Activated CD4-positive, alpha-beta T cell treated with anti-CD3 and anti-CD28 coated beads, Interleukin-2, amount 10 ng/mL, durations not matched to agents 24 days and 14 days (primary cell): ENCODE measurements at regions of chr1 and their contacts with region 1.

Region 1: GRCh38 chr1:68197891-68198290 is 34.4 kb downstream of the WLS start:
- DNase-seq: no peak
- H3K4me3 Mint-ChIP-seq: no peak overlapping the region
- H3K27ac Mint-ChIP-seq: no peak overlapping the region
- H3K4me1 Mint-ChIP-seq: no peaks in the 10 kb centered on the region
- H3K27me3 Mint-ChIP-seq: peaks cover 4% of the 10 kb centered on the region

Region 2: DNA sequence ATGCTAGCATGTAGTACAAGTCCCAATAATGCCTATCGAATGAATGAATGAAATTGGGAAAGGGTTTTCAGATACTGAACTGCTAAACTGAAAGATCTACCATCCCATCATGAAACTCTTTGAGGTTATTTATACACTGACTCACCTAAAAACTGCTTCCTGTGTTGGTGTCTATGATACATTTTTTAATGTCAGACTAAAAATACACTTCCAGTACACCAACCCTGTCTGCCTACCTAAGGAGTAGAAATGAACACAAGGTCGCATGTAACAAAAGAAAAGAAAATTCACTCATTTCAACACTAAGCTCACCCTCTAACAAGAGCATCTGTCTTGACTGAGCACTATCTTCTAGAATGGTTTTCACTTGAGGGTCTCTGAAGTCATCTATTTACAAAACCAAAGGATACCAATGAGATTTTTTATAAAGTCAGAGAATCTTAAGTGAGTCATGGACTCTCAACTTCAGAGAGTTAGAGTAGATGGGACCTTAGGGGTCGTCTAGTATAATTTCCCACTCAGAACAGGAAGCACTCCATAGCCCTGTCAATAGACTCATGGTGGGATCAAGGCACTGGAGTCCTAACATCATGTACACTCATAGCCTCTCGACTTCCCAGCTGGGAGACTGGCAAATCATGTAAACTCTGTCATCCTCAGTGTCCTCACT is 18.9 kb before region 1 on chr1:
- intact Hi-C with region 1: loop called (anchors 1 kb)
- DNase-seq: no peak
- H3K4me3 Mint-ChIP-seq: peak overlapping the region; percentile 38
- H3K27ac Mint-ChIP-seq: peak overlapping the region; percentile 78
- H3K4me1 Mint-ChIP-seq: peaks cover 14% of the 10 kb centered on the region
- H3K27me3 Mint-ChIP-seq: no peaks in the 10 kb centered on the region